ENCODE measurements at regions of chr13 and their contacts with region 1.

Region 1: DNA sequence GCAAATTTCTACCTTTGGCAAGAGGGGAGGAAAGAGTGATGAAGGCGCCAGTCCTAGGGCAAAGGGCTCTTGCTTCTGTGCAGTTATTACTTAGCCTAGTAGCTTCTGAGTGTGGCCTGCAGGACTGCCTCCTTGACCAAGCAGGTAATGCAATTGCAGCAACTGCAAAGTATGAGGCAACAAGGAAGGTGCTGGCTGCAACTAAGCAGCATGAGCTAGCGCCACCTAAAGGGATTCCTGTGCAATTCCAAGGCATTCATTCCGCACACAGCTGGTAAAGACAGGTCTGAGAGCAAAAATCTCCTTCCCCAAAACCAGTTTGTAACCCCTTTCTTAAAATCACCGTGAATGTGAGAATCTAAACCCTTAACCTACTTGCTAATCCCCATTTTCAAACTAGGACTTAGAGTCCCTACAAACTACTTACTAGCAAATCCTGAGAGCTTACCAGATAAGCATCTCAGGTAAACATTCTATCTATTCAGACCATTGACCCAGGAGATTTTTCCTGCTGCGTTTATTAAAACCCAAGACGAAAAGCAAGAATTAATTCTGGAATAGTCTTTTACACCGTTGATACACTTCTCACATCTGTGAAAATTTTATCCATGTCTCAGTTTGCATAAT is 62.9 kb downstream of the DCT start:
- DNase-seq: peak; percentile 19
- ATAC-seq: no peak
- H3K4me3 Mint-ChIP-seq: no peak overlapping the region
- H3K27ac Mint-ChIP-seq: peak overlapping the region; percentile 9
- H3K4me1 Mint-ChIP-seq: peaks cover 71% of the 10 kb centered on the region
- H3K27me3 Mint-ChIP-seq: peaks cover 12% of the 10 kb centered on the region

Region 2: DNA sequence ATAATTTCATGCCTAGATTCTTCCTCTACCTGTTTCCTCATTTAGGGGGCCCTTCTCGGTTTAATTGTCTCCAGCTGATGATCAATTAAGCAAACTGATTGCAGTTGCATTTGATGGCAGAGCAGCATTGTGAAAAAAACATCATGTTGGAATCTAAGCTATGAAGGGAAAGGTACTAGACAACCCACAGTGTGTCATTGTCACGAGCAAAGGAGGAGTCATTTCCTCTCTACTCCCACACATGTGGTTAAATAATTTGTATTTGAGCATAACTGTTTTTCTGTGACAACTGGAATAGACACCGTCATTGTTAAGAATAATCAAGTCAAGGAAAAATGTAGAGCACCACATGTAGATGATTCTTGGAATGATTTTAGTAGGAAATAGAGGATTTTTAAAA is 177.4 kb before region 1 on chr13:
- CTCF ChIA-PET with region 1: no interaction called
- POLR2A ChIA-PET with region 1: no interaction called
- intact Hi-C with region 1: loop called in 1 of 2 experiments (anchors 5 kb)
- DNase-seq: peak; percentile 23
- ATAC-seq: peak; percentile 68
- H3K4me3 Mint-ChIP-seq: no peak overlapping the region
- H3K27ac Mint-ChIP-seq: no peak overlapping the region
- H3K4me1 Mint-ChIP-seq: peaks cover 40% of the 10 kb centered on the region
- H3K27me3 Mint-ChIP-seq: no peaks in the 10 kb centered on the region

Region 3: DNA sequence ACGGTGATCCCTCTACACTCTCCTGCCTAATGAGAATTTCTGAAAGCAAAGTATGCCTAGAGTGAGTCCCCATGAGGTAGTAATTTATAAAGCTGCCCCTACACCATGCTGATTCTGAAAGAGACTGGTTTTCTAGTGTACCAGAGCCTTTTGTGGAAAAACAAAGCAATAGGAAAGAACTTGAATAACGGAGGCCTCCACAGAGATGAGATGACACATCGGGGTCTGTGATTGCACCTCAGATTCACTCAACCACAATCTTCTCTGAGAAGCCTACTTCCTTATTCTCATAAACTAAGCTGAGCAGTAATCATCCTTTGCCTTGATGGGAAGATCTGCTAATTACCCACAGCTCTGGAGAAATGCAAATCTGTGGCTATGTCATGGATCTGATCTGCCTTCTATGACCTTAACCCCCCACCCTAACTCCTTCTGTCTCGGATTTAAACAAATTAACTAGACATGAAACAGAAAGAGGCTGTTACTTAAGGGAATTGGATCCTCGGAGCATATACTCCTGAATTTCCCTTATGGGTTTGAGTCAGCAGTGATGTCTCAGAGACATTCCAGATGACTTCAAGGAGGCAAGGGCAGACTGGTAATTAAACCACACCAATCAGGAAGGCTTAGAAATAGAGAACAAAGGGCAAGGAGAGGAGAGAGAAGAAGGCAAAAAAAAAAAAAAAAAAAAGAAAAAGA is 65.1 kb before region 1 on chr13:
- CTCF ChIA-PET with region 1: no interaction called
- POLR2A ChIA-PET with region 1: no interaction called
- intact Hi-C with region 1: loop called (anchors 1 to 2 kb)
- DNase-seq: peak; percentile 34
- ATAC-seq: peak; percentile 73
- H3K4me3 Mint-ChIP-seq: no peak overlapping the region
- H3K27ac Mint-ChIP-seq: peak overlapping the region; percentile 59
- H3K4me1 Mint-ChIP-seq: peaks cover 26% of the 10 kb centered on the region
- H3K27me3 Mint-ChIP-seq: peaks cover 7% of the 10 kb centered on the region

Region 4: GRCh38 chr13:94549232-94550061 is 132.9 kb after region 1 on chr13:
- CTCF ChIA-PET with region 1: interaction called, 3 read pairs
- POLR2A ChIA-PET with region 1: no interaction called
- intact Hi-C with region 1: loop called (anchors 1 kb)
- DNase-seq: peak; percentile 96
- ATAC-seq: peak; percentile 94
- H3K4me3 Mint-ChIP-seq: peak overlapping the region; percentile 83
- H3K27ac Mint-ChIP-seq: peak overlapping the region; percentile 97
- H3K4me1 Mint-ChIP-seq: peaks cover 20% of the 10 kb centered on the region
- H3K27me3 Mint-ChIP-seq: peaks cover 3% of the 10 kb centered on the region

Region 5: GRCh38 chr13:94667190-94667589 is 250.6 kb after region 1 on chr13:
- CTCF ChIA-PET with region 1: interaction called, 4 read pairs
- POLR2A ChIA-PET with region 1: no interaction called
- intact Hi-C with region 1: loop called in 1 of 2 experiments (anchors 2 kb)
- DNase-seq: peak; percentile 44
- ATAC-seq: peak; percentile 88
- H3K4me3 Mint-ChIP-seq: no peak overlapping the region
- H3K27ac Mint-ChIP-seq: peak overlapping the region; percentile 89
- H3K4me1 Mint-ChIP-seq: peaks cover 38% of the 10 kb centered on the region
- H3K27me3 Mint-ChIP-seq: peaks cover 21% of the 10 kb centered on the region

Region 6: GRCh38 chr13:95181586-95181985 is 765.0 kb after region 1 on chr13:
- CTCF ChIA-PET with region 1: no interaction called
- POLR2A ChIA-PET with region 1: no interaction called
- intact Hi-C with region 1: loop called in 1 of 2 experiments (anchors 5 kb)
- DNase-seq: no peak
- ATAC-seq: peak; percentile 45
- H3K4me3 Mint-ChIP-seq: no peak overlapping the region
- H3K27ac Mint-ChIP-seq: peak overlapping the region; percentile 14
- H3K4me1 Mint-ChIP-seq: peaks cover 73% of the 10 kb centered on the region
- H3K27me3 Mint-ChIP-seq: no peaks in the 10 kb centered on the region

Region 7: DNA sequence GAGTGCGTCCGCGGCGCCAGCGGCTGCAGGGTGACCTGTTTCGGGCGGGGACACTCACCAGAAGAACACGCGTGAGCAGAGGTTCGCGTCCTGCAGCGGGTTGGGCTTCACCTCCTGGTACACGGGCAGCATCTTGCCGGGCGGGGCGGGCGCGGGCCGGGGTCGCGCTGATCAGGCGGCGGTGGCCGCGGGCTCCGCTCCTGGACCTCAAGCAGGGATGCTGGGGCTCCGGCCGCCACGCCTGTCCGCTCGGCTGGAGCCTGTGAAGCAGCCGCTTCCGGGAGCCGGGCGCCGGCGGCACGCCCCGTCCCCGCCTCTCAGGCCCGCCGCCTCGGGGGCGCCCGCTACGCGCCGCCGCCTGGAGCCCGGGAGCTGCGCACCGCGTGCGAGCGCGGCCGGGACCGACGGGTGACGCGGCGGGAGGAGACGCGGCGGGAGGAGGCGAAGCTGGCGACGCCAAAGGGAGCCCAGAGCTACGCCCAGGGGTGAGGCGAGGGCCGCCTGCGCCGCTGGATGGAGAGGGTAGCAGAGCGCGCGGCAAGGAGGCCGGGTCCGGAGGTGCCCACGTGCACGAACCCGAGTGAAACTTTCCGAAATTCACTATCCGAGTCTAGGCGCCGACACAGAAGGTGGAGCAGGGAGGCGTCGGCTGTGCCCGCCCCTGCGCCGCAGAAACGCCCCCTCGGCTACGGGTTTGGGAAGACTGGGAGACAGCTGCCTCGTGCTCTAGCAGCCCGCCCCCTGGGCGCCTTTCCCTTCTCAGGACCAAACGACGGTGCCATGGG is 884.8 kb after region 1 on chr13 and contains the start of gene ABCC4:
- CTCF ChIA-PET with region 1: no interaction called
- POLR2A ChIA-PET with region 1: no interaction called
- intact Hi-C with region 1: no loop called
- DNase-seq: peak; percentile 76
- ATAC-seq: peak; percentile 81
- H3K4me3 Mint-ChIP-seq: peak within 1 kb of the TSS; percentile 78
- H3K27ac Mint-ChIP-seq: peak within 1 kb of the TSS; percentile 66
- H3K4me1 Mint-ChIP-seq: peaks cover 43% of the 10 kb centered on the region
- H3K27me3 Mint-ChIP-seq: peaks cover 8% of the 10 kb centered on the region
- total RNA-seq, gene ABCC4: 9.0 to 9.5 TPM

Region 8: GRCh38 chr13:95420501-95420900 is 1003.9 kb after region 1 on chr13:
- CTCF ChIA-PET with region 1: no interaction called
- POLR2A ChIA-PET with region 1: no interaction called
- intact Hi-C with region 1: no loop called
- DNase-seq: no peak
- ATAC-seq: no peak
- H3K4me3 Mint-ChIP-seq: no peak overlapping the region
- H3K27ac Mint-ChIP-seq: no peak overlapping the region
- H3K4me1 Mint-ChIP-seq: peaks cover 2% of the 10 kb centered on the region
- H3K27me3 Mint-ChIP-seq: no peaks in the 10 kb centered on the region